Activated B cell treated with CpG ODN at 0.5 μM for 24 hours (primary cell): ENCODE measurements at regions of chr16 and their contacts with region 1.

Region 1: GRCh38 chr16:23182460-23183309 is at the start of gene SCNN1G:
- DNase-seq: peak; percentile 71
- ATAC-seq: peak; percentile 96
- H3K4me3 Mint-ChIP-seq: peak within 1 kb of the TSS; percentile 72
- H3K27ac Mint-ChIP-seq: no peak within 1 kb of the TSS
- H3K4me1 Mint-ChIP-seq: peaks cover 15% of the 10 kb centered on the region
- H3K27me3 Mint-ChIP-seq: peaks cover 34% of the 10 kb centered on the region
- CTCF ChIP-seq: peak; percentile 30
- total RNA-seq, gene SCNN1G: not detected in 2 replicates

Region 2: DNA sequence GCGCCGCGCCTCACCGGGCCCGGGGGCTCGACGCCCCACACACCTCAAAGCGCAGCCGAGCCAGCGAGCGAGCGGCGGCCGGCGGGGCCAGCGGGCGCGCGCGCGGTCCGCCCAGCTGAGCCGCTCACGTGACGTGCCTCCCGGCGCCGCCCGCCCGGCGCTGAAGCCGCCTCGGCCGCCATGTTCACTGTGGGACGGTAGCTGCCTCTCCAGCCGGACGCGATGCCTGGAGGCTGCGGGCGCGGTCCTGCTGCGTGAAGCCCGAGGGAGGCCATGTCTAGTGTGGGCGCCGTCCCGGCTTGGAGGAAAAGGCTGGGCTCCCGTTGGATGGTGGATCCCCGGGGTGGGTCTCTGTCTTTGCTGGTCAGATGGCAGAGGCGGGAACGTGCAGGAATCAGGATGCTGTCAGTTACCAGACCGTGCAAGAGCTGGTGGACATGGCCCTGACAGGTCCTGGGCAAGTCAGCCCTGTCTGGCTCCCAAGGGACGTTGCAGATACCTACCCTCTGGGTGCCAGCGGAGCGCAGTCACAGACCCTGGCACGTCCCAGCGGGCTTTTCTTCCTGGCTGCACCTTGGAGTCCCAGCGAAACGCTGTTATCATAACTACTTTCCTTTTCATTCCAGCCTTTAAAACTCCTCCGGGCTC is 33.2 kb before region 1 on chr16 and contains the start of gene USP31:
- CTCF ChIA-PET with region 1: no interaction called
- POLR2A ChIA-PET with region 1: no interaction called
- intact Hi-C with region 1: loop called (anchors 1 kb)
- DNase-seq: peak; percentile 82
- ATAC-seq: peak; percentile 96
- H3K4me3 Mint-ChIP-seq: peak within 1 kb of the TSS; percentile 91
- H3K27ac Mint-ChIP-seq: peak within 1 kb of the TSS; percentile 81
- H3K4me1 Mint-ChIP-seq: peaks cover 11% of the 10 kb centered on the region
- H3K27me3 Mint-ChIP-seq: peaks cover 3% of the 10 kb centered on the region
- CTCF ChIP-seq: no peak
- total RNA-seq, gene USP31: 3.6 and 4.6 TPM in 2 replicates

Region 3: GRCh38 chr16:23435500-23435899 is 252.8 kb after region 1 on chr16:
- CTCF ChIA-PET with region 1: interaction called, 64 read pairs
- POLR2A ChIA-PET with region 1: interaction called, 7 read pairs
- intact Hi-C with region 1: loop called (anchors 1 kb)
- DNase-seq: peak; percentile 41
- ATAC-seq: peak; percentile 92
- H3K4me3 Mint-ChIP-seq: no peak overlapping the region
- H3K27ac Mint-ChIP-seq: no peak overlapping the region
- H3K4me1 Mint-ChIP-seq: peaks cover 8% of the 10 kb centered on the region
- H3K27me3 Mint-ChIP-seq: no peaks in the 10 kb centered on the region
- CTCF ChIP-seq: peak; percentile 75

Region 4: DNA sequence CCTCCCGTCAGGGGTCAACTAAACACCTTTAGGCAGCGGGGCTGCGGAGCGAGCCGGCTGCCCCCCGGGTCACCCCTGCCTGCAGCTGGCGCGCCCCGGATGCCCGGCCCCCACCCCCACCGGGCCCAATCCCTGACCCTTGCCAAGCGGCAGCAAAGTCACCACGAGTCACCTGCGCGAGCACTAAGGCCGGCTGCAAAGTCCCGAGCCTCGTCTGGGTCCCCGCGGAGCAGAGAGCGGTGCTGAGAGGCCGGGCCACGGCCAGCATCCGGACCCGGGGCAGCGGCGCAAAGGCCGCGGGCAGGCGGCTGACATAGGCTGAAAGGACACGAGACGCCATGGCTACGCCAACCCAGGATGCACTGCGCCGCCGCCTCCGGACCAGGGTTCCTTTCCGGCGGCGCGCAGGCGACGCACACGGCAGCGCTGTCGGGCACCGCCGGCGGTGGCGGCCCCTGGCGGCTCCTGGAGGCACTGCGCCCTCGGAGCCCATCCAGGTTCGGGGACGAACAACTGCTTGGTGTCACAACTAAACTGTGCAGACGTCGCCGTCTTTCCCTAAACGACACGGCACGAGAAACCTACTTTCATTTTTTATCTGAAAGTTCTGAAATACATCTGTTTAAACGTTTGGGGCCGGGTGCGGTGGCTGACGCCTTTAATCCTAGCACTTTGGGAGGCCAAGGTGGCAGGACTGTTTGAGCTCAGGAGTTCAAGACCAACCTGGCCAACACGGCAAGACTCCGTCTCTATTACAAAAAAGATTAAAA is 413.5 kb after region 1 on chr16 and contains the start of gene NDUFAB1:
- CTCF ChIA-PET with region 1: interaction called, 3 read pairs
- POLR2A ChIA-PET with region 1: no interaction called
- intact Hi-C with region 1: loop called (anchors 1 kb)
- DNase-seq: peak; percentile 95
- ATAC-seq: peak; percentile 99
- H3K4me3 Mint-ChIP-seq: peak within 1 kb of the TSS; percentile 88
- H3K27ac Mint-ChIP-seq: peak within 1 kb of the TSS; percentile 65
- H3K4me1 Mint-ChIP-seq: peaks cover 28% of the 10 kb centered on the region
- H3K27me3 Mint-ChIP-seq: no peaks in the 10 kb centered on the region
- CTCF ChIP-seq: peak; percentile 89
- total RNA-seq, gene NDUFAB1: 68.4 and 74.5 TPM in 2 replicates